CD4-positive, alpha-beta T cell (primary cell): ENCODE measurements at regions of chr18 and their contacts with region 1.

Region 1: GRCh38 chr18:57630002-57630753 is 8.5 kb upstream of the NARS1 start:
- DNase-seq: peak; percentile 91 to 97 (median 93)
- ATAC-seq: peak; percentile 99
- H3K4me3 ChIP-seq: peak overlapping the region; percentile 64
- H3K4me3 Mint-ChIP-seq: peak overlapping the region; percentile 96
- H3K27ac ChIP-seq: peak overlapping the region; percentile 38 to 50
- H3K27ac Mint-ChIP-seq: peak overlapping the region; percentile 88
- H3K4me1 ChIP-seq: peaks cover 20% of the 10 kb centered on the region
- H3K4me1 Mint-ChIP-seq: peaks cover 18% of the 10 kb centered on the region
- H3K27me3 ChIP-seq: no peaks in the 10 kb centered on the region
- H3K27me3 Mint-ChIP-seq: no peaks in the 10 kb centered on the region
- CTCF ChIP-seq: peak; percentile 75

Region 2: GRCh38 chr18:56638271-56639093 is 991.7 kb before region 1 on chr18 and contains the start of gene TXNL1:
- CTCF ChIA-PET with region 1: no interaction called
- POLR2A ChIA-PET with region 1: no interaction called
- intact Hi-C with region 1: loop called in 1 of 2 experiments (anchors 2 kb)
- DNase-seq: peak; percentile 97 to 100 (median 99)
- ATAC-seq: peak; percentile 95
- H3K4me3 ChIP-seq: peak within 1 kb of the TSS; percentile 94
- H3K4me3 Mint-ChIP-seq: peak within 1 kb of the TSS; percentile 95
- H3K27ac ChIP-seq: peak within 1 kb of the TSS; percentile 83 to 91
- H3K27ac Mint-ChIP-seq: peak within 1 kb of the TSS; percentile 92
- H3K4me1 ChIP-seq: peaks cover 16% of the 10 kb centered on the region
- H3K4me1 Mint-ChIP-seq: peaks cover 52% of the 10 kb centered on the region
- H3K27me3 ChIP-seq: no peaks in the 10 kb centered on the region
- H3K27me3 Mint-ChIP-seq: no peaks in the 10 kb centered on the region
- CTCF ChIP-seq: no peak
- total RNA-seq, gene TXNL1: 41.5 to 41.6 TPM

Region 3: GRCh38 chr18:57586251-57587049 is 43.7 kb before region 1 on chr18 and contains the start of gene FECH:
- CTCF ChIA-PET with region 1: interaction called, 3 read pairs
- POLR2A ChIA-PET with region 1: interaction called, 3 read pairs
- intact Hi-C with region 1: loop called in 1 of 2 experiments (anchors 1 kb)
- DNase-seq: peak; percentile 18 to 84 (median 60)
- ATAC-seq: peak; percentile 94
- H3K4me3 ChIP-seq: peak within 1 kb of the TSS; percentile 74
- H3K4me3 Mint-ChIP-seq: peak within 1 kb of the TSS; percentile 93
- H3K27ac ChIP-seq: no peak within 1 kb of the TSS
- H3K27ac Mint-ChIP-seq: peak within 1 kb of the TSS; percentile 76
- H3K4me1 ChIP-seq: peaks cover 17% of the 10 kb centered on the region
- H3K4me1 Mint-ChIP-seq: peaks cover 28% of the 10 kb centered on the region
- H3K27me3 ChIP-seq: no peaks in the 10 kb centered on the region
- H3K27me3 Mint-ChIP-seq: no peaks in the 10 kb centered on the region
- CTCF ChIP-seq: no peak
- total RNA-seq, gene FECH: 7.5 to 8.1 TPM

Region 4: DNA sequence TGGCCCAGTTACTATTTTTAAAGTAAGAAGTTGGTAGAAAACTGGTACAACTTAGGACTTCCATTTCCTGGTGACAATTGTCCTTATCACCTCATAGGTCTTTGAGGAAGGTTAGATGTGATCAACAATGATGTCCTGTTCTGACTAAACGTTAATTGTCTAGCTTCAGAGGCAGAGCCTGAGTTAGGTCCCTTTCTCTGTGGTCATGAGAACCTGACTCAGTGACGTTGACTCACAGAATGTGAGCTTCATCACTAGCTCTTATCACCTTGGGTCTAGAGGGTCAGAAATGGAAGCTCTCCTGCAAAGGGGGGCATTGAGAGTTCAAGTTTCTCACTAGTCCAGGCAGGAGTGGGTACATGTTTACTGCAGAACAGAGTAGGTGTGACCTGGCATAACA is 233.5 kb after region 1 on chr18:
- CTCF ChIA-PET with region 1: no interaction called
- POLR2A ChIA-PET with region 1: no interaction called
- intact Hi-C with region 1: no loop called
- DNase-seq: no peak
- ATAC-seq: no peak
- H3K4me3 ChIP-seq: no peak overlapping the region
- H3K4me3 Mint-ChIP-seq: no peak overlapping the region
- H3K27ac ChIP-seq: no peak overlapping the region
- H3K27ac Mint-ChIP-seq: no peak overlapping the region
- H3K4me1 ChIP-seq: no peaks in the 10 kb centered on the region
- H3K4me1 Mint-ChIP-seq: no peaks in the 10 kb centered on the region
- H3K27me3 ChIP-seq: peaks cover 0 to 4% of the 10 kb centered on the region in 2 experiments
- H3K27me3 Mint-ChIP-seq: peaks cover 25% of the 10 kb centered on the region
- CTCF ChIP-seq: no peak

Region 5: DNA sequence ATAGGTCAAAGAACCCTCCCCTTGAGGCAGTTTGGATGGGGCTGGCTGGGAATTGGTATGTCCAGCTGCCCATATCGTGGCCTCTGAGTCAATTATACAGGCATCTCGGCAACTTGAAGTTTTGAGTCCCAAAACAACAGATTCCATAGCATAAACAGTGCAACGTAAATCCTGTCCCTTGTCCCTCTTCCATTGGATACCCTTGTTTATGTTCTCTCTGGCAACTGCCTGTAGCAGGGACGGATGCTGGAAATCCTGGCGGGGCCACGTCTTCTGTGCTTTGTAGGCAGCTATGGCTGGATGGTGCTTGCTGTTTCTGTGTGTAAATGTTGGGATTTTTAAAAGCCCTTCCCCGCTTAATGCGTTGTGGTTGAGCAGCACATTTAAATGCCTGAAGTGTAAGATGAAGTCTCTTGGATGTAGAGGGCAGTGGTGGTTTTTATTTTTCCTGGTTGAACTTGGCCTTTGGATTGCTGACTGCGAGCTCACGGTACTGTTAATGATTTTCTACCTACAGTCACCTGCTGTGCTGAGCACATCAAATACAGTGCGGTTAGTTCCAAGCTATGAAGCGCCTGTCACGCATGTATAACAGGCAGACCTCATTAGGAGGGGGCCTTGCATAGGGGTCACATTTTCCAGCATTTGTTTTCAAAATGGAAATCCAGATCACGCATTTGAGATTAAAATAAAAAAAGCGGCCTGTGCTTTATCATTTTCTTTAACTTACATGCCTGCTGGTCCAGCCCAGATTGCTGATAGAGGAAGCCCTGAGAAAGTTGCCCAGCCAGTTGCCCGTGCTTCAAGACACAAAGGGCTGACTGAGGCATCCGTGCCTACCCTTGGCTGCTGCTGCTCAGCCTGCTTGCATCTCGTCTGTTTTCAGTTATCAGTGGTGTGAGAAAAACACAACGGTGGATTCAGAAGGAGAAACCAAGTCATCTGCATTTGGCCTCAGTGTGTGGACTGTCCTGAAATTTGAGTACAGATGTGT is 498.5 kb after region 1 on chr18:
- CTCF ChIA-PET with region 1: no interaction called
- POLR2A ChIA-PET with region 1: no interaction called
- intact Hi-C with region 1: loop called (anchors 5 to 10 kb)
- DNase-seq: no peak
- ATAC-seq: no peak
- H3K4me3 ChIP-seq: no peak overlapping the region
- H3K4me3 Mint-ChIP-seq: no peak overlapping the region
- H3K27ac ChIP-seq: no peak overlapping the region
- H3K27ac Mint-ChIP-seq: no peak overlapping the region
- H3K4me1 ChIP-seq: peaks cover 2% of the 10 kb centered on the region
- H3K4me1 Mint-ChIP-seq: no peaks in the 10 kb centered on the region
- H3K27me3 ChIP-seq: no peaks in the 10 kb centered on the region
- H3K27me3 Mint-ChIP-seq: peaks cover 17% of the 10 kb centered on the region
- CTCF ChIP-seq: no peak

Region 6: GRCh38 chr18:58180738-58181353 is 550.7 kb after region 1 on chr18:
- CTCF ChIA-PET with region 1: no interaction called
- POLR2A ChIA-PET with region 1: no interaction called
- intact Hi-C with region 1: loop called in 1 of 2 experiments (anchors 5 kb)
- DNase-seq: peak; percentile 33 to 77 (median 54)
- ATAC-seq: peak; percentile 51
- H3K4me3 ChIP-seq: no peak overlapping the region
- H3K4me3 Mint-ChIP-seq: no peak overlapping the region
- H3K27ac ChIP-seq: no peak overlapping the region
- H3K27ac Mint-ChIP-seq: no peak overlapping the region
- H3K4me1 ChIP-seq: no peaks in the 10 kb centered on the region
- H3K4me1 Mint-ChIP-seq: no peaks in the 10 kb centered on the region
- H3K27me3 ChIP-seq: no peaks in the 10 kb centered on the region
- H3K27me3 Mint-ChIP-seq: peaks cover 6% of the 10 kb centered on the region
- CTCF ChIP-seq: peak; percentile 85